A673 (cell line): ENCODE measurements at regions of chr12 and their contacts with region 1.

Region 1: DNA sequence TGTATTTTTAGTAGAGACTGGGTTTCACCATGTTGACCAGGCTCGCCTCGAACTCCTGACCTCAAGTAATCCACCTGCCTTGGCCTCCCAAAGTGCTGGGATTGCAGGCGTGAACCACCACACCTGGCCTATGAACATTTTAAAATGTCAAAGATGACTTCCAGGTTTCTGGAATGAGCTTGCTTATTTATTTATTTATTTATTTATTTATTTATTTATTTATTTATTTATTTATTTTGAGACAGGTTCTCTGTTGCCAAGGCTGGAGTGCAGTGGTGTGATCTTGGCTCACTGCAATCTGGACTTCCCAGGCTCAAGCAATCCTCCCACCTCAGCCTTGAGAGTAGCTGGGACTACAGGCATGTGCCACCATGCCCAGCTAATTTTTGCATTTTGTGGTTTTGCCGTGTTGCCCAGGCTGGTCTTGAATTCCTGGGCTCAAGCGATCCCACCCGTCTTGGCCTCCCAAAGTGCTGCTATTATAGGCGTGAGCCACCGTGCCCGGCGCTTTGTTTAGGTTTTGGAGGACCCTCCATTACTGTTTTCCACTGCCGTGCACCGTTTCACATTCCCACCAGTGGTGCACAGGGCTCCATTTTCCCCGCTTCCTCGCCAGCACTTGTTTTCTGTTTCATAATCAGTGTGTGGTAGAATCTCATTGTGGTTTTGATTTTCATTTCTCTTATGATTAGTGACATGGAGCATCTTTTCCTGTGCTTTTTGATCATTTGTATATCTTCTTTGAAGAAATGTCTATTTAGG is 6.4 kb upstream of the CFAP251 start:
- DNase-seq: no peak
- H3K4me3 ChIP-seq: no peak overlapping the region
- H3K27ac ChIP-seq: no peak overlapping the region
- H3K4me1 ChIP-seq: peaks cover 21% of the 10 kb centered on the region
- H3K27me3 ChIP-seq: no peaks in the 10 kb centered on the region
- CTCF ChIP-seq: no peak

Region 2: GRCh38 chr12:121825041-121825523 is 86.9 kb before region 1 on chr12:
- CTCF ChIA-PET with region 1: no interaction called
- POLR2A ChIA-PET with region 1: interaction called, 17 read pairs
- intact Hi-C with region 1: no loop called
- DNase-seq: no peak
- H3K4me3 ChIP-seq: no peak overlapping the region
- H3K27ac ChIP-seq: no peak overlapping the region
- H3K4me1 ChIP-seq: no peaks in the 10 kb centered on the region
- H3K27me3 ChIP-seq: no peaks in the 10 kb centered on the region
- CTCF ChIP-seq: no peak

Region 3: DNA sequence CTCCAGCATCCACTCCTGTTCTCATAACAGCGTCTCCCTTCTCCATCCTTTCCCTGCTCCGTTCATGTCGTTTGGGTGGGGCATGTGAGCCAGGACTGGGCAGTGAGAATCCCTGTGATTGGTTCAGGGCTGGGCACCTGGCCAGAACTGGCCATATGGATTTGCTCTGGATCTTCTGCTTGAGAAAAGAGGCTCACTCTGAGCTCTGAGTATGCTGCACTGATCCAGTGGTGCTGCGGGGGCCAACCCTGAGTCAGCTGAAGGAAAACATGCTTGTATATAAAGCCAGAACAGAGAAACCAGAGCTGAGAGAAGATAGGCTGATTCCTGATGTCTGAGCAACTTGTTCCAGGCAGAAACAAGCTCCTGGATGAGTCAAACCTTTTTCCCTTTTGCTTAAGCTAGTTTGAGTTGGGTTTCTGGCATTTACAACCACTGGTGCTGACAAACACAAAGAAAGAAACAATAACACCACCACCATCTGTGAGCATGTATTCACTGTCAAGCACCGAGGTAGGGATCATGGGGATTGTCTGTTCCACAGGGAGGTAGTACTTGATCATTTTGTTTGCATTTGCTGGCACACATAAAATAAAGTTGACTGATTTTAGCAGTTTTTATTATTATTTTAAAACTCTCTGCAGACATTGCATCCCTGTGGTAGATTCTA is 39.3 kb before region 1 on chr12:
- CTCF ChIA-PET with region 1: no interaction called
- POLR2A ChIA-PET with region 1: no interaction called
- intact Hi-C with region 1: no loop called
- DNase-seq: no peak
- H3K4me3 ChIP-seq: no peak overlapping the region
- H3K27ac ChIP-seq: no peak overlapping the region
- H3K4me1 ChIP-seq: no peaks in the 10 kb centered on the region
- H3K27me3 ChIP-seq: no peaks in the 10 kb centered on the region
- CTCF ChIP-seq: no peak